ENCODE measurements at regions of chr12 and their contacts with region 1.

Region 1: GRCh38 chr12:92034858-92035401 is 110.7 kb downstream of the BTG1 start:
- DNase-seq: peak; percentile 55 to 62 (median 59)
- H3K4me3 ChIP-seq: peak overlapping the region; percentile 24 to 44
- H3K4me3 Mint-ChIP-seq: peak overlapping the region; percentile 83 to 97 (median 91)
- H3K27ac ChIP-seq: peak overlapping the region; percentile 65
- H3K27ac Mint-ChIP-seq: peak overlapping the region; percentile 97 to 100 (median 98)
- H3K4me1 ChIP-seq: peaks cover 92% of the 10 kb centered on the region
- H3K4me1 Mint-ChIP-seq: peaks cover 66 to 97% (median 81%) of the 10 kb centered on the region in 4 donors
- H3K27me3 ChIP-seq: no peaks in the 10 kb centered on the region
- H3K27me3 Mint-ChIP-seq: no peaks in the 10 kb centered on the region

Region 2: GRCh38 chr12:91663310-91663709 is 371.6 kb before region 1 on chr12:
- CTCF ChIA-PET with region 1: no interaction called
- POLR2A ChIA-PET with region 1: no interaction called
- intact Hi-C with region 1: no loop called
- DNase-seq: no peak
- H3K4me3 ChIP-seq: no peak overlapping the region
- H3K4me3 Mint-ChIP-seq: no peak overlapping the region
- H3K27ac ChIP-seq: no peak overlapping the region
- H3K27ac Mint-ChIP-seq: no peak overlapping the region
- H3K4me1 ChIP-seq: peaks cover 10% of the 10 kb centered on the region
- H3K4me1 Mint-ChIP-seq: peaks cover 6 to 12% (median 9%) of the 10 kb centered on the region in 4 donors
- H3K27me3 ChIP-seq: no peaks in the 10 kb centered on the region
- H3K27me3 Mint-ChIP-seq: no peaks in the 10 kb centered on the region

Region 3: GRCh38 chr12:91804533-91804932 is 230.4 kb before region 1 on chr12:
- CTCF ChIA-PET with region 1: no interaction called
- POLR2A ChIA-PET with region 1: no interaction called
- intact Hi-C with region 1: no loop called
- DNase-seq: no peak
- H3K4me3 ChIP-seq: no peak overlapping the region
- H3K4me3 Mint-ChIP-seq: no peak overlapping the region
- H3K27ac ChIP-seq: no peak overlapping the region
- H3K27ac Mint-ChIP-seq: no peak overlapping the region
- H3K4me1 ChIP-seq: no peaks in the 10 kb centered on the region
- H3K4me1 Mint-ChIP-seq: peaks cover 0 to 5% (median 0%) of the 10 kb centered on the region in 4 donors
- H3K27me3 ChIP-seq: no peaks in the 10 kb centered on the region
- H3K27me3 Mint-ChIP-seq: no peaks in the 10 kb centered on the region

Region 4: DNA sequence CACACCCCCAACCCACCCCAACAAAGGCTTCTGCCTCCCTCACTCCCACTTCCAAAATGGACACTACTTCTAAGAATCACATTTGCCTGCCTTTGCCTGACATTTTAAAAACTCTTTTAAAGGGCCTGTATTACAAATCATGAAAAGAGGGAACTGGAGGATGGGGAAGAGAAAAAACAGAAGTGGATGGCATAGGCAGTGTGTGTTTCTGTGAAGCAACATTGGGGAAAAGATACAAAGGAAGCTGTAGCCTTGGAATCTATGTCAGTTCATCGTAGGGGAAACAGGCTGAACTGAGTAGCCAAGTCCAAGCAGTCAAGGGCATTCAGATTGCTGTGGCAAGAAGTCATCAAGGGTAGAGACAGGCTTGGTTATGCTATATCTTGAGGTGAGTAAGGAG is 163.2 kb before region 1 on chr12:
- CTCF ChIA-PET with region 1: interaction called, 4 read pairs
- POLR2A ChIA-PET with region 1: interaction called, 29 read pairs
- intact Hi-C with region 1: loop called (anchors 2 kb)
- DNase-seq: no peak
- H3K4me3 ChIP-seq: no peak overlapping the region
- H3K4me3 Mint-ChIP-seq: peak overlapping the region; percentile 1 to 81 (median 42)
- H3K27ac ChIP-seq: peak overlapping the region; percentile 56
- H3K27ac Mint-ChIP-seq: peak overlapping the region; percentile 83 to 99 (median 94)
- H3K4me1 ChIP-seq: peaks cover 64% of the 10 kb centered on the region
- H3K4me1 Mint-ChIP-seq: peaks cover 45 to 74% (median 57%) of the 10 kb centered on the region in 4 donors
- H3K27me3 ChIP-seq: no peaks in the 10 kb centered on the region
- H3K27me3 Mint-ChIP-seq: no peaks in the 10 kb centered on the region

Region 5: DNA sequence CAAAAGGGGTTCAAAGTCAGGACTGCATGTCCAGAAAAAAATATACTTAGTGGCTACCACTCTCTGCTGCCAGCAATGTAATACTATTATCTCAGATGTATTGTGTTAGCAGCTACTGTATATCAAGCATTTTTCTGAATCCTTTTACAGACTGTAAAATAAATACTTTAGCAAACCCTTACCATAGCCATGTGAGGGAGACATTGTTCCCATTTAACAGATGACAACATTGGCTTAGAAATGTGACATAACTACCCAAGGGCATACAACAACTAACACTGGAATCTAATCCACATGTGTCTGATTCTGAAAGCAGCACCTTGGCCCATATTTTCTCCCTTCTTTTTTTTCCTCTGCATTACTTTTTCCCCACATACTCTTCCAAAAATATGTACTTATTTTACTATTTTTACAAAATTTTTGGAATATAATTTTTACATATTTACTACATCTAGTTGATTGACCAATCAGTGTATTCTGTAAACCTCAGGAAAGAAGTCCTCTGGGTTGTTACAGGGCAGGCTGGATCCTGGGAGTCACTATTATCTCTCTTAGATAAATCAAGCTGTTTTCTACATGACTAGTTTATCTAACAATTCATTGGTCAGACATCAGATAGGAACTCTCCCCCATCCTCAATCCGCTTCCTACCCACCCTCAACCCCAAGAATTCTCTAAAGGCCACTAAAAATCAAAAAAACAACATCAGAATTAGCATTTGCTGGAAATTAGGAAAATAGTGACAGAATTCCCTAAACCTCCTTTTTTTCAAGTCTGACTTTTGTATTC is 43.3 kb before region 1 on chr12:
- CTCF ChIA-PET with region 1: interaction called, 21 read pairs
- POLR2A ChIA-PET with region 1: interaction called, 15 read pairs
- intact Hi-C with region 1: loop called (anchors 5 kb)
- DNase-seq: peak in 4 of 5 donors; percentile 51 to 67 (median 54)
- H3K4me3 ChIP-seq: no peak overlapping the region
- H3K4me3 Mint-ChIP-seq: no peak overlapping the region
- H3K27ac ChIP-seq: no peak overlapping the region
- H3K27ac Mint-ChIP-seq: peak overlapping the region in 5 of 7 donors; percentile 22 to 85 (median 70)
- H3K4me1 ChIP-seq: peaks cover 27% of the 10 kb centered on the region
- H3K4me1 Mint-ChIP-seq: peaks cover 18 to 37% (median 28%) of the 10 kb centered on the region in 4 donors
- H3K27me3 ChIP-seq: no peaks in the 10 kb centered on the region
- H3K27me3 Mint-ChIP-seq: no peaks in the 10 kb centered on the region

Region 6: GRCh38 chr12:92019491-92020277 is 15.2 kb before region 1 on chr12:
- CTCF ChIA-PET with region 1: interaction called, 4 read pairs
- POLR2A ChIA-PET with region 1: interaction called, 11 read pairs
- intact Hi-C with region 1: no loop called
- DNase-seq: no peak
- H3K4me3 ChIP-seq: no peak overlapping the region
- H3K4me3 Mint-ChIP-seq: no peak overlapping the region
- H3K27ac ChIP-seq: no peak overlapping the region
- H3K27ac Mint-ChIP-seq: peak overlapping the region in 1 of 7 donors; percentile 74
- H3K4me1 ChIP-seq: peaks cover 14% of the 10 kb centered on the region
- H3K4me1 Mint-ChIP-seq: peaks cover 12 to 16% (median 13%) of the 10 kb centered on the region in 4 donors
- H3K27me3 ChIP-seq: no peaks in the 10 kb centered on the region
- H3K27me3 Mint-ChIP-seq: no peaks in the 10 kb centered on the region

Region 7: DNA sequence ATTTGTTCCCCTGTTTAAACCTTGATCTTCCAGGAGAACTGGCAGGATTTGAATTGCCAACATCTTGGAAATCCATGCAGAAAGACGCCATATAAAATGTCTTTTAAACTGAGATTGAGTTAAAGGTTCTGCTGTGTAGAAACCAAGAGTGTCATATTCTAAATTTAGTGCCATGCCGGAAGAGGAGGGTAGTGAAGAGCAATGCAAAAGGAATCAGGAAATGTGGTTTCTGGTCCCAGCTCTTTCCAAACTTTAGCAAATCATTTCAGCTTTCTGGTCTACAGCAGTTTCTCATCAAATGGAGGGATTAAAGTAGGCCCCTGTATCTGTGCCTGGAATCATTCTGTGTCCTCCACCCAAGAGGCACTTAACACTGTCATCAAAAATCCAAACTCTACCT is 25.0 kb after region 1 on chr12:
- CTCF ChIA-PET with region 1: interaction called, 3 read pairs
- POLR2A ChIA-PET with region 1: interaction called, 11 read pairs
- intact Hi-C with region 1: loop called (anchors 1 kb)
- DNase-seq: no peak
- H3K4me3 ChIP-seq: no peak overlapping the region
- H3K4me3 Mint-ChIP-seq: peak overlapping the region in 1 of 8 donors; percentile 75
- H3K27ac ChIP-seq: no peak overlapping the region
- H3K27ac Mint-ChIP-seq: peak overlapping the region in 4 of 7 donors; percentile 10 to 93 (median 30)
- H3K4me1 ChIP-seq: peaks cover 53% of the 10 kb centered on the region
- H3K4me1 Mint-ChIP-seq: peaks cover 44 to 88% (median 68%) of the 10 kb centered on the region in 4 donors
- H3K27me3 ChIP-seq: no peaks in the 10 kb centered on the region
- H3K27me3 Mint-ChIP-seq: no peaks in the 10 kb centered on the region

Region 8: DNA sequence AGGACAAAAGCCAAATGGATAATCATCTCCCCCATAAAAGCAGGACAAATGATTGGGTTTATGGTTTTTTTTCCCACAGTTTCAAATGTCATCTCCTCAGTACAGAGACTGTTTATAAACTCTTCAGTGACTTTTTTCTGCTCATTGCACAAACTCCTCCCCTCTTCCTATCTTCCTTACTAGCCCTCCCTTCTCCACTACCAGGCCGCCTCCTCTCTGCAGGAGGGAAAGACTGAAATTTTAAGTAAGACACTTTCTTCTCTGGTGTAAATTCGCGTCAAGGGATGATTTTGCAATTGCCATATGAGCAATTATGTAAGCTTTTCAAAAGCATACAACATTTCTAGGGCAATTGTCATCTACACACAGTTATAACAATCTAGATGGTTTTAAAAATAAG is 73.7 kb after region 1 on chr12:
- CTCF ChIA-PET with region 1: interaction called, 3 read pairs
- POLR2A ChIA-PET with region 1: interaction called, 3 read pairs
- intact Hi-C with region 1: loop called (anchors 2 kb)
- DNase-seq: no peak
- H3K4me3 ChIP-seq: no peak overlapping the region
- H3K4me3 Mint-ChIP-seq: peak overlapping the region in 1 of 8 donors; percentile 42
- H3K27ac ChIP-seq: no peak overlapping the region
- H3K27ac Mint-ChIP-seq: peak overlapping the region in 2 of 7 donors; percentile 2 to 5
- H3K4me1 ChIP-seq: peaks cover 51% of the 10 kb centered on the region
- H3K4me1 Mint-ChIP-seq: peaks cover 40 to 80% (median 60%) of the 10 kb centered on the region in 4 donors
- H3K27me3 ChIP-seq: no peaks in the 10 kb centered on the region
- H3K27me3 Mint-ChIP-seq: no peaks in the 10 kb centered on the region

Region 9: GRCh38 chr12:92396647-92397252 is 361.8 kb after region 1 on chr12:
- CTCF ChIA-PET with region 1: no interaction called
- POLR2A ChIA-PET with region 1: interaction called, 10 read pairs
- intact Hi-C with region 1: loop called (anchors 5 kb)
- DNase-seq: no peak
- H3K4me3 ChIP-seq: no peak overlapping the region
- H3K4me3 Mint-ChIP-seq: peak overlapping the region in 6 of 8 donors; percentile 19 to 81 (median 57)
- H3K27ac ChIP-seq: peak overlapping the region; percentile 72
- H3K27ac Mint-ChIP-seq: peak overlapping the region; percentile 93 to 98 (median 97)
- H3K4me1 ChIP-seq: peaks cover 93% of the 10 kb centered on the region
- H3K4me1 Mint-ChIP-seq: peaks cover 74 to 100% (median 89%) of the 10 kb centered on the region in 4 donors
- H3K27me3 ChIP-seq: no peaks in the 10 kb centered on the region
- H3K27me3 Mint-ChIP-seq: no peaks in the 10 kb centered on the region

Measured in CD4-positive, alpha-beta memory T cell (primary cell).